ENCODE measurements at regions of chr1 and their contacts with region 1.

Region 1: GRCh38 chr1:14648896-14649855 is 50.7 kb downstream of the KAZN start:
- DNase-seq: no peak
- ATAC-seq: no peak
- H3K4me3 ChIP-seq: no peak overlapping the region
- H3K27ac ChIP-seq: no peak overlapping the region
- H3K4me1 ChIP-seq: no peaks in the 10 kb centered on the region
- H3K27me3 ChIP-seq: peaks cover 0 to 5% (median 0%) of the 10 kb centered on the region in 7 donors
- CTCF ChIP-seq: no peak

Region 2: DNA sequence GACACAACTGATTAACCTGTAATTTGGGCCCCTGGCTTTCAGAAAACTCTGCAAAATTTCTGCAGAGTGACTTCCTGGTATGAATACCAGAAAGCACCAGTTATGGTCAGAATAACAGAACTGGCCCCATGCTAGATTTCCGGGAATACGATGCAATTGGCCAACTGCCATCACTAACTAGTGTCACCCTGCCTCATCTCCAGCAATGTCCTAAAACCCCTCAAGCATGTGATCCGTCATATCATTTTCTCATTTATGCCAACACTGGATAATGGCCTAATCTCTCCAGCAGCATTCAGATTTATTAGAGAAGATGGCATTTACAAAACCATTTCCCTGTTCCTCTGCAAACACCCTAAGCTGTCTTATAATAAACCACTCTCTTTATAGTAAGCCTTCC is 35.2 kb before region 1 on chr1:
- intact Hi-C with region 1: no loop called
- DNase-seq: no peak
- ATAC-seq: no peak
- H3K4me3 ChIP-seq: no peak overlapping the region
- H3K27ac ChIP-seq: no peak overlapping the region
- H3K4me1 ChIP-seq: no peaks in the 10 kb centered on the region
- H3K27me3 ChIP-seq: peaks cover 0 to 13% (median 0%) of the 10 kb centered on the region in 7 donors
- CTCF ChIP-seq: no peak

Region 3: DNA sequence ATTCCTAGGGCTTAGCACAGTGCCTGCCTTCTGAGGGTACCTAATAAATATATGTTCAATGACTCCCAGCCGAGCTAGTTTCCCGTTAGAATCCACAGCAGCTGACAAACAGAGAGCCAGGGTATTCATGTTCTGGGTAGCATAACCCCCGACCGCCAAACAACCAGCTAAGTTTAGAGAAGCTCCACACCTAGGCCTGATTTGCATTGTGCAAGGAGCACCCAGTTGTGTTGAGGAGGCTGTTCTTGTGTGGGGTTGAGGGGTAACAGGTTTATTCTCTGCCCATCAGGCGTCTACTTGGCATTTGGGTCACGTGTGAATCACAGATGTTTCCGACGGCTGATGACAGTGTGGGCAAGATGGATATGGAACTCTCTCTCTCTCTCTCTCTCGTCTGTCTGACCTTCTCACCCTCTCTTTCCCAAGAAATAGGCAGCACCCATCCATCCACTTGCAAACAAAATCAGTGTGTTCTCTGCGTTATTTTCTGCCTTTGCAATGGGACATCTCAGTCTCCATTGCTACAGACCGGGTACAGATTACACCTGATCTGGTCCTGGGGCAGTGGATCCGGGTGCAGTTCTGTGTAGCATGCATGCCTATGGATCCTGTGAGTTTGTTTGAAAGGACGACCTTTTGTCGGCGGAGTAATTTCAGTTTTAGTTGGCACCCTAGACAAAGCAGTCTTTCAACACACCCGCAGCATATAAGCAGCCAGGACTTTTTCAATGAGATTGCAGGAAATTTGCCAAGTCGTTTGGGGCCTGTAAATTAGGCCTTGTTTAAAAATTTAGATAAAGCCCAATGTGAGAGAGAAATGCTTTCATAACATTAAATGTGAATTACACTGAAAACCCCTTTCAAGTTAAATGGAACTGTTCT is 21.3 kb before region 1 on chr1:
- intact Hi-C with region 1: loop called in 1 of 10 experiments (anchors 2 kb)
- DNase-seq: no peak
- ATAC-seq: peak in 2 of 8 donors; percentile 5 to 15
- H3K4me3 ChIP-seq: no peak overlapping the region
- H3K27ac ChIP-seq: peak overlapping the region in 1 of 10 donors; percentile 20
- H3K4me1 ChIP-seq: peaks cover 0 to 14% (median 0%) of the 10 kb centered on the region in 9 donors
- H3K27me3 ChIP-seq: peaks cover 0 to 24% (median 1%) of the 10 kb centered on the region in 7 donors
- CTCF ChIP-seq: no peak

Measured in heart right ventricle (tissue), 16 donors.